HEK293 (cell line): ENCODE measurements at regions of chr7 and their contacts with region 1.

Region 1: GRCh38 chr7:116525913-116526861 is 1.4 kb downstream of the CAV1 start:
- H3K4me3 ChIP-seq: peak overlapping the region; percentile 59
- H3K27ac ChIP-seq: peak overlapping the region; percentile 93; the same call in 1 of the 2 replicates
- H3K4me1 ChIP-seq: 0 out of 2 replicates have a peak, but pooled peaks cover 4% of the 10 kb centered on the region
- CTCF ChIP-seq: peak; percentile 72

Region 2: GRCh38 chr7:117101026-117101425 is 574.8 kb after region 1 on chr7:
- CTCF ChIA-PET with region 1: interaction called, 10 read pairs
- POLR2A ChIA-PET with region 1: no interaction called
- H3K4me3 ChIP-seq: no peak overlapping the region
- H3K27ac ChIP-seq: no peak overlapping the region
- H3K4me1 ChIP-seq: no peaks in the 10 kb centered on the region
- CTCF ChIP-seq: no peak

Region 3: DNA sequence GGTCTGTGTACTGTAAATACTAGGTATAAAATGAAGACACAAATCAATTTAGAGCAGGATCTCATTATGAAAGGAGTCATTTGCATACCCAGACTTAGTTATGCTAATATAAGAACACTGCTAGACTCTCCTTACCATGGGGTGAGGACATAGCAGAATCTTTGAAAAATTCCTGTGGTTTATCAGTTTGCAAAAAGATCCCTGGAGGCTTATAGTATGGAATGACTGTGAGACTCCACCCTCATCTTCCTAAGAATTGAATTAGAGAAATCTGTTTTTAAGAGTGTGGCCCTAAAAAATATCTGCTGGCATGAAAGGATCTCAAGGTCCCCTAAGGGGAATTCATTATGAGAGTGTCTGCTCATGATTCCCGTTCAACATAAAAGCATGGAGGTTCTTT is 733.4 kb after region 1 on chr7:
- CTCF ChIA-PET with region 1: no interaction called
- POLR2A ChIA-PET with region 1: no interaction called
- H3K4me3 ChIP-seq: no peak overlapping the region
- H3K27ac ChIP-seq: no peak overlapping the region
- H3K4me1 ChIP-seq: no peaks in the 10 kb centered on the region
- CTCF ChIP-seq: no peak